AG04449 (cell line): ENCODE measurements at regions of chr3 and their contacts with region 1.

Region 1: DNA sequence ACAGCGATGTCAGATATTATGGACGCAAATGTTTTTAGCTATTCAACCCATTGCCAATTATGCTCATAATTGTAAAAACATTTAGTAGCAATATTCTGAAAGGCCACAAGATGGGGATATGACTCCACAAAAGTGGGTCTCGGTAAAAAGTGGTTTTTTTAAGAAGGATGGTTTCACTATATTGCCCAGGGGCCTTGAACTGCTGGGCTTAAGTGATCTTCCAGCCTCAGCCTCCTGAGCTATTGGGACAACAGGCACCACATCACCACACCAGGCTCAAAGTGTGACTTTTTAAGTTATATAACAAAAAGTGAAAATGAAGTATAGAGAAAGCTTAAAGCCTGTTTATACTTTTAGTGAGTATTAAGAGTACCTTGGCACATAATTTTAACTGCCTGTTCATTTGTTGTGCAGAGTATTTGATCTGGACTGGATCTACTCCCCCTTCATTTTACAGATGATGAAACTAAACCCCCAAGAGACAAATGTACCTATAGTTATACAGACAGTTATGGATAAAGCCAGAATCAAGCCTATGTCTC is 9.4 kb downstream of the NAA50 start:
- DNase-seq: no peak
- H3K4me3 ChIP-seq: no peak overlapping the region
- CTCF ChIP-seq: peak; percentile 23

Region 2: DNA sequence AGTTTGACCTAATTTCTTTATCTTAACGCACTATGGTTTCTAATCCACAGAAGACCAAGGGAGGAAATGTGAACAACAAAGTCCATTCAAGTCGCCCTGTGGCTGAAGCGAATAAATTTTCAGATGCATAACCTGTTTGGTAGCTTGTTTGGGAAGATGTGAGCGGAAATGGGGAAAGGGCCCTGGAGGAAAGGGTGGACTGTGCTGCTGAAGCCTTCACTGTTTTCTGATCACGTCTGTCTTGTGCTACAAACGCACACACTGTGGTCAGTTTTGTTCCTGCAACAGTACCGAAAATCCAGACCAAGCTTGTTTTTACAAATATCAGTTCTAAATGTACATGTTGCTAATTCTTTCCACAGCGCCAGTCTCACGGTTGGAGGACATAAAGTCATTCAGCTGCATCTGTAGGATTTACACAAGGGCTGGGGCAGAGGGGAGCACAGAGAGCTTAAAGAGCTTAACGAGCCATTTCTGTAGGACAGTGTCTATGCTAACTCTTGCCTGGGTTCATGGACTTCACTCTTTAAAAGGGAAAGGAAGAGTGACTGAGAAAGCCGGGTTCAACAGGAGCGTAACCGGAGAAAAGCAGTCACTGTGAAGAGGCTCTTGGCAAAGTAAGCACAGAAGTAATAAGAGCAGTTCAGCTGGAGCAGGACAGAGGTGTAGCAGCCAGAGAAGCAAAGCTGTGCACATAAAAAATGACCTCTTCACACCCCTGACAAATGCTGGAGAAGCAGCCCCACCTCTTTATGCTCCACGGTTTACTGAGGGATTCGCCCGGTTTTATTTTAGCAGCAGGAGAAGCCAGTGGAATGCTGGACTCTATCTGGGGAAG is 106.8 kb before region 1 on chr3:
- CTCF ChIA-PET with region 1: no interaction called
- POLR2A ChIA-PET with region 1: no interaction called
- DNase-seq: no peak
- H3K4me3 ChIP-seq: no peak overlapping the region
- CTCF ChIP-seq: no peak

Region 3: DNA sequence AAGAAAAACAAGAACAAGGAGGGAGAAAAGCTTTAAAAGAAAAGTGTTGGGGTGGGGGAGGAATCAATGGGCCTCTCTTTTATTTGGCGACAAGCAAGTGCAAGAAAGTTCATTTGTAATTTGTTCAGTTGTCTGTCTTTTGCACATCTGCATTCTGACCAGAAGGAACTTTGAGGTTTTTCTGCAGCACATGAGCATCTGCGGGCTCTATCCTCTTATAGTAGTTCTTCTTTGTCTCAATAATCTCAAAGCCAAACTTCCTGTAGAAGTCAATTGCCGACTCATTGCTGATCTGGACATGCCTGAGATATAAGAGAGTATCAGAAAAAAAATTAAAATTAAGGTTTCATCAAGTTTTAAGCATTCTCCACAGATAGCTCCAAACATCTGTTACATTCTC is 15.0 kb before region 1 on chr3:
- CTCF ChIA-PET with region 1: interaction called, 25 read pairs
- POLR2A ChIA-PET with region 1: no interaction called
- DNase-seq: no peak
- H3K4me3 ChIP-seq: no peak overlapping the region
- CTCF ChIP-seq: no peak

Region 4: GRCh38 chr3:113764698-113765097 is 28.1 kb after region 1 on chr3:
- CTCF ChIA-PET with region 1: no interaction called
- POLR2A ChIA-PET with region 1: no interaction called
- DNase-seq: no peak
- H3K4me3 ChIP-seq: no peak overlapping the region
- CTCF ChIP-seq: no peak

Region 5: DNA sequence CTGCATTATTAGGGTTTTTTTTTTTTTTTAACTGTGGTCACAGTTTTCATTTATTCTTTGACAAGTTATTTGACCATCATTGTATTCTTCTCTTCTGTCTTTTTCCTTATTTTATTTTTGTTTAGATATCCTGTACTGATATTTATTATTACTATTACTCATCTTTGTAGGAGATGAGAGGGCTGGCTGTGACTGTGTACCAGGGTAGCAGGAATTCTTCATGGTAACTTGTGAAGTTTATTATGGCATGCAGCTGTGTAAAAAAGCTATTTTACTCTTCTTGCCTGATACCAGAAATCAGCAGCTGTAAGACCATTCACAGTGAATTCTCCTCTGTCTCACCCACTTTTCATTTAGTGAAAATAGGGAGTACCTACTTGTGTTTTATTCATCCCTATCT is 54.8 kb after region 1 on chr3:
- CTCF ChIA-PET with region 1: interaction called, 11 read pairs
- POLR2A ChIA-PET with region 1: no interaction called
- DNase-seq: no peak
- H3K4me3 ChIP-seq: no peak overlapping the region
- CTCF ChIP-seq: no peak

Region 6: DNA sequence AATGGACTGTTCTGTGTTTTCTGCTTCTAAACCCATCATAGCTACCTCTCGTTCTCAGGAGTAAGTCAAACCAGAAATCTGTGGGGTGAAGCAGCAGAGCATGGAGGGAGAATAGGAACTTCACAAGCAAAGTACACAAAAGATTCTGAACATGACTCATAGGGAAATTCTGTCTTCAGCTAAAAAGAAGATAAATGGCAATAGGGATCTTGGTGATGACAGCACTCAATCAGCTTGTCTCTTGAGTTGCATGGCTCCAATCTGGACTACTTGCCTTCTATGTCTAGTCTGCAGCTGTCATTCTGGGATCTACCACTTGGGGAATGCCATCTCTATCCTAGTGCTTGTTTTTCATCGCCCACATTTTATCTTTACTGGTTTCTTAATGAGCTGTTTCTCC is 88.5 kb after region 1 on chr3:
- CTCF ChIA-PET with region 1: interaction called, 10 read pairs
- POLR2A ChIA-PET with region 1: no interaction called
- DNase-seq: no peak
- H3K4me3 ChIP-seq: no peak overlapping the region
- CTCF ChIP-seq: peak; percentile 16

Region 7: GRCh38 chr3:113873814-113874526 is 137.4 kb after region 1 on chr3:
- CTCF ChIA-PET with region 1: no interaction called
- POLR2A ChIA-PET with region 1: no interaction called
- DNase-seq: no peak
- H3K4me3 ChIP-seq: no peak overlapping the region
- CTCF ChIP-seq: no peak

Region 8: GRCh38 chr3:113906568-113907140 is 170.0 kb after region 1 on chr3:
- CTCF ChIA-PET with region 1: interaction called, 10 read pairs
- POLR2A ChIA-PET with region 1: no interaction called
- DNase-seq: no peak
- H3K4me3 ChIP-seq: no peak overlapping the region
- CTCF ChIP-seq: no peak